Activated CD8-positive, alpha-beta T cell treated with anti-CD3 and anti-CD28 coated beads, Interleukin-2, amount 10 ng/mL, durations not matched to agents 7 days and 5 days (primary cell): ENCODE measurements at regions of chr19 and their contacts with region 1.

Region 1: DNA sequence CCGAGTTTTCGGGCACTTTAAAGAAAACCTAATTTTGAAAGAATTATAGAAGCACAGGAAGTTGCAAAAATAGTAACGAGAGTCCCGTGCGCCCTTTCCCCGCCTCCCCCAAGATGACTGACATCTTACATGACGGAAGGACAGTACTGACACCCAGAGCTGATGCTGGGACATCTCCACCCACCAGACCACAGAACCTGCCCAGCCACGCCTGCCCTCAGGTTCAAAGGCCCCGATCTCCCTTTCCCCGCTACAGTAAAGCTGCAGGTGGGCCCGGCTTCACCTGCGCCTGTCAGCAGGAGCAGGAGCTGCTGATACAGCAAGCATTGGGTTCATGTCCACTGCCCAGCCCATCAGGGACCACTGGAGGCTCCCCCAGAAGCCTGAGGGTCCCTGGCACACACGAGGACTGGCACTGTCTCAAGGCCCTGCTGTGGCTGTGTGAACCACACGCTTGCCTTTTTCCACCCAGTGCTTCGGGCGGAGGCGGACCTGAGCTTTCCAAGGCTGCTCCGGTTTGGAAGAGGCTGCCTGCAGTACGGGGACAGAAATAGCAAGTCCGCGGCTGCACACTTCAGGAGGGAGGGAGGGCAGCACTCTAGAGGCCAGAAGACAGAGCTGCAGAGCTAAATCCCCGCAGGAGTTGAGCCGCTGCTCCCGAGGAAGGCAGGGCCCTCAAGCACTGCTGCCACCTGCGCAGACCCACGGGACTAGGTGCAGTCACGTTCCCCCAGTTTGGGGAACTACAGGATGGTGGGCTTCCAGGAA is 8.7 kb downstream of the MAP2K2 start:
- DNase-seq: peak; percentile 90
- ATAC-seq: peak; percentile 98
- H3K4me3 Mint-ChIP-seq: peak overlapping the region; percentile 64
- H3K27ac Mint-ChIP-seq: peak overlapping the region; percentile 85
- H3K4me1 Mint-ChIP-seq: peaks cover 64% of the 10 kb centered on the region
- H3K27me3 Mint-ChIP-seq: no peaks in the 10 kb centered on the region

Region 2: GRCh38 chr19:4077882-4078614 is 37.2 kb before region 1 on chr19:
- CTCF ChIA-PET with region 1: no interaction called
- POLR2A ChIA-PET with region 1: no interaction called
- DNase-seq: peak; percentile 72
- ATAC-seq: peak; percentile 71
- H3K4me3 Mint-ChIP-seq: peak overlapping the region; percentile 68
- H3K27ac Mint-ChIP-seq: peak overlapping the region; percentile 93
- H3K4me1 Mint-ChIP-seq: peaks cover 63% of the 10 kb centered on the region
- H3K27me3 Mint-ChIP-seq: no peaks in the 10 kb centered on the region

Region 3: GRCh38 chr19:4103073-4103418 is 12.2 kb before region 1 on chr19:
- CTCF ChIA-PET with region 1: interaction called, 8 read pairs
- POLR2A ChIA-PET with region 1: interaction called, 11 read pairs
- DNase-seq: no peak
- ATAC-seq: no peak
- H3K4me3 Mint-ChIP-seq: no peak overlapping the region
- H3K27ac Mint-ChIP-seq: peak overlapping the region; percentile 99
- H3K4me1 Mint-ChIP-seq: peaks cover 48% of the 10 kb centered on the region
- H3K27me3 Mint-ChIP-seq: no peaks in the 10 kb centered on the region

Region 4: GRCh38 chr19:4224470-4224869 is 109.2 kb after region 1 on chr19:
- CTCF ChIA-PET with region 1: no interaction called
- POLR2A ChIA-PET with region 1: no interaction called
- DNase-seq: no peak
- ATAC-seq: no peak
- H3K4me3 Mint-ChIP-seq: no peak overlapping the region
- H3K27ac Mint-ChIP-seq: no peak overlapping the region
- H3K4me1 Mint-ChIP-seq: no peaks in the 10 kb centered on the region
- H3K27me3 Mint-ChIP-seq: no peaks in the 10 kb centered on the region